WTC11 (cell line): ENCODE measurements at regions of chr2 and their contacts with region 1.

Region 1: DNA sequence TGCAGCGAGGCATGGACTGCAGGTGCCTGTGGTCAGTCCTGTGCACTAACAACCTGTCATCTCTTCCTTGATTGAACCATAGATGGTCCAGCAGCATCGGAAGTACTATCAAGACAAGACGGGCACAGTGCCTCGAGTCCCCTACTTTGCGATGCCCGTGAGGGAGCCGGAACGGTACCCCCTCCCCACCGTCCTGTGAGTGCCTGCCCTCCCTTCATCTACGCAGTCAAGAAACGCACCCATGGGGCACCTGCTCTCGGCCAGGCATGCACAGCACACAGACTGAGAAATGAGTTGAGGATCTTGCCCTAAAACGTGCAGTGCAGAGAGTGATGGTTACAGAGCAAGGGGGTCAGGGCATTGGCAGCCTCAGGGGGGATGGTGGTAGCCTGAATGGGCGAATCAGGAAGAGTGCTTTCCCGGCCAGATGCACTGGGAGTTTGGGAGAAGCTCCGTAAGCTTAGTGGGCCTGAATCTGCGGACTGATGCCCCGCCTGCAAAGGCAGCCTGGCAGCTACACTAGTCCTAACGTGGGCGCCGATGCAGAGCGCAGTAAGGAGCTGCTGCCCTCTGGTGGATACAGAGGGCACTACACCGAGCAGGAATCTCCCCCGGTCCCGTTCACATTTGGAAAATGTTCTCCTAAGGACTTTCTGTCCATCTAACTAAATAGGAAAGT is 63.6 kb downstream of the CIB4 start:
- DNase-seq: peak; percentile 80
- ATAC-seq: peak; percentile 95
- H3K4me3 Mint-ChIP-seq: no peak overlapping the region
- H3K27ac Mint-ChIP-seq: no peak overlapping the region
- H3K4me1 Mint-ChIP-seq: peaks cover 6% of the 10 kb centered on the region
- H3K27me3 Mint-ChIP-seq: peaks cover 24% of the 10 kb centered on the region
- CTCF ChIP-seq: peak; percentile 99

Region 2: GRCh38 chr2:26376799-26377198 is 200.8 kb before region 1 on chr2:
- CTCF ChIA-PET with region 1: no interaction called
- POLR2A ChIA-PET with region 1: no interaction called
- DNase-seq: no peak
- ATAC-seq: no peak
- H3K4me3 Mint-ChIP-seq: no peak overlapping the region
- H3K27ac Mint-ChIP-seq: no peak overlapping the region
- H3K4me1 Mint-ChIP-seq: no peaks in the 10 kb centered on the region
- H3K27me3 Mint-ChIP-seq: no peaks in the 10 kb centered on the region
- CTCF ChIP-seq: no peak

Region 3: DNA sequence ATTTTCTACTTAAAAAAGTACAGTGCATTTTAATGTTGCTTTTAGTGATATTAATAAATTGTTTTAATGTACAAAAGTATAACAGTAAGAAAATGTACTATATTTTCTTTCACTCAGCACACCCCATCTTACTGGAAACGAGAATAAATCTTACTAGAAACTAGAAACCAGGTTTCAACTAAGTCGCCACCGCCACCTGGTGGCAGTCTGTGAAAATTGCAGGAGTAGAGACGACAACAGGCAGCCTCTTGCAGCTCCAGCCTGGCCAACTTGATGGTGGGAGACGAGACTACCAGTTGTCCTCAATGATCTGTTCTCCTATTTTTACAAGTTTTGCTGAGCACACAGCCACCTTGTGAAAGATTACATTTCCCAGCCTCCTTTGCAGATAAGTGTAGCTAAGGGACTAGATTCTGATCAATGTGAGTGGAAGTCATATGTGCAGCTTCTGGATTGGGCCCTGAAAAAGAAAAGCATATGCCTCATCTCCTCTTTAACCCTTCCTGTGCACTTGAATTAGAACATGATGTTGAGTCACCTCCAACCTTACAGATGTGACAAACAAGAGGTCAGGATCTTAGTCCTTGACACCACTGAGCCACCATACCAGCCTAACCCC is 108.4 kb before region 1 on chr2:
- CTCF ChIA-PET with region 1: interaction called, 10 read pairs
- POLR2A ChIA-PET with region 1: no interaction called
- DNase-seq: peak; percentile 88
- ATAC-seq: peak; percentile 49
- H3K4me3 Mint-ChIP-seq: no peak overlapping the region
- H3K27ac Mint-ChIP-seq: no peak overlapping the region
- H3K4me1 Mint-ChIP-seq: 0 out of 2 replicates have a peak, but pooled peaks cover 2% of the 10 kb centered on the region
- H3K27me3 Mint-ChIP-seq: no peaks in the 10 kb centered on the region
- CTCF ChIP-seq: peak; percentile 94

Region 4: DNA sequence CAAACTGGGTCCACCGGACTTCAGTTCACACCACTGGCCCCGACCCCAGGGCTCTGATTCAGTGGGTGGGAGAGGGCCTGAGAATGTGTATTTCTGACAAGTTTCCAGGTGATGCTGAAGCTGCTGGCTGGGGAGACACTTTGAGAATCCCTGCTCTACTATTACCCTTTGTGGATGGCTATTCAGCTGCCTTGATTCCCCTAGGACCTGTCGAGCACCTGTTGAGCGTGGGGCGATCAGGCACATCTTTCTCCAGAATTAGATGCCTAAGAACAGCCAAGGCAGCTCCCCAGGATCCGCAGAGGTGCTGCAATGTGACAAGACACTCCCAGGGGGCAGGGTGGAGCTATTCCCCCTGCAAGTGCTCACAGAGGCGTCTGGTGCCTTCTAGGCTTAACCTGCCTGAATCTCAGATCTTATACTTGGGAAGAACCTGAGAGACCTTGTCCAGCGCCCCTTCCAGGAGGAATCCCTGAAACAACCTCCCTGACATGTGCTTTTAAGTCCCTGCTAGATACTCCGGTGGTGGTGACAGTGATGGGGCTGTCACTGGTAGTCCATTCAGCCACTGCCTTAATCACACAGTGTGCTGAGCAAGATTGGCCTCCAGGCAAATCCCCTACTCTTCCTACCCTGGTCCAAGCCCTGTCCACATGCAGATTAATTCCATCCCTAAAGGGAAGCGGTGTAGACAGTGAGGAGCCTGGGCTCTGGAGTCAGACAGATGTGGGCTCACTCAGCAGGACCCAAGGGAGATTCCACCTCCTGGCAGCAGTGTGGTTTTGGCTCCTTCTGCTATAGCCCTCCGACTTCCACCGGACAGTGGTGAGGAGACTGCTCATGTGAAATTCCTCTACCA is 56.3 kb before region 1 on chr2:
- CTCF ChIA-PET with region 1: interaction called, 97 read pairs
- POLR2A ChIA-PET with region 1: no interaction called
- DNase-seq: peak; percentile 72
- ATAC-seq: peak; percentile 93
- H3K4me3 Mint-ChIP-seq: no peak overlapping the region
- H3K27ac Mint-ChIP-seq: no peak overlapping the region; the same call in 1 of the 2 replicates
- H3K4me1 Mint-ChIP-seq: no peaks in the 10 kb centered on the region
- H3K27me3 Mint-ChIP-seq: no peaks in the 10 kb centered on the region
- CTCF ChIP-seq: no peak

Region 5: GRCh38 chr2:26542194-26542455 is 35.4 kb before region 1 on chr2:
- CTCF ChIA-PET with region 1: interaction called, 37 read pairs
- POLR2A ChIA-PET with region 1: no interaction called
- DNase-seq: no peak
- ATAC-seq: no peak
- H3K4me3 Mint-ChIP-seq: no peak overlapping the region
- H3K27ac Mint-ChIP-seq: no peak overlapping the region
- H3K4me1 Mint-ChIP-seq: peaks cover 28% of the 10 kb centered on the region
- H3K27me3 Mint-ChIP-seq: no peaks in the 10 kb centered on the region
- CTCF ChIP-seq: no peak

Region 6: DNA sequence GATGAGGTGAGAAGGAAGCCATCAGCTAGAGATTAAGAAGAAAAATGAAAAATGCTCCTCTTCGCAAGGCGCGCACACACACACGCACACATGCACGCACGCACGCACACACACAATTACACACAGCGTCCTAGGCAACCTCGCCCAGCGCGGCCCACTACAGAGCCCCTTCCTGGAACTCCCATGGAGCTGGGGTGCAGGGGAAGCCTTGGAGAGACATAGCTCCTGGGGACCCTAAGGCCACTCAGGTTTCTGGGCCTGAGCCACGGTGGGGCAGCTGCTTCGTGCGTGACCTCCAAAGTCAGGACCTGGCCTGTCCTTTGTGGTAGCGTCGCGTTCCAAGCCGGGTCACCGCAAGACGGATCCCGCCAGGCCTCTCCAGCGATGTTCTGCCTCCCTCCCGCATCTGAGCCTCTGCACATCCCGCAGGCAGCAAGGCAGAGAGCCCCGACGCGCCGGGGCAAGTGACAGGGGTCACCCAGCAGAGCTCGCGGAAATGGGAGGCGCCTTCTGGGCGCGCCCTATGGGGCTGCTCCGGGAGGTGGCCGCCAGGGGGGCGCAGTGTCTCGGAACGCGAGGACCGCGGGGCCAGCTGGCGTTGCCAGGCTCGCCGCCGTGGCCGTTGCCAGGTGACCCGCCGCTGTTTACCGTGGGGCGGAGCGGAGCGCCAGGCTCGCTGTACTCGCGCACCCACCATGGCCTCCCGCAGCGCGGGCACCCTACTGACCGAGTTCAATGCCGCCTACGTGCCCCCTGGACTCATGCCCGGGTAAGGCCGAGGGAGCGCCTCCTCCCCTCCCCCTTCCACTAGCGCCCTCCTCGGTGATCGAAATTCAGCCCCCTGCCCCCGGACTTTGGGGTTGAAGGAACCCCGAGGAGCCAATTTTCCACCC is 15.4 kb before region 1 on chr2:
- CTCF ChIA-PET with region 1: interaction called, 83 read pairs
- POLR2A ChIA-PET with region 1: no interaction called
- DNase-seq: peak; percentile 47
- ATAC-seq: peak; percentile 49
- H3K4me3 Mint-ChIP-seq: peak overlapping the region; percentile 62
- H3K27ac Mint-ChIP-seq: no peak overlapping the region
- H3K4me1 Mint-ChIP-seq: peaks cover 8% of the 10 kb centered on the region
- H3K27me3 Mint-ChIP-seq: peaks cover 43% of the 10 kb centered on the region
- CTCF ChIP-seq: no peak

Region 7: GRCh38 chr2:26745609-26746327 is 168.2 kb after region 1 on chr2:
- CTCF ChIA-PET with region 1: interaction called, 13 read pairs
- POLR2A ChIA-PET with region 1: no interaction called
- DNase-seq: peak; percentile 88
- ATAC-seq: peak; percentile 87
- H3K4me3 Mint-ChIP-seq: no peak overlapping the region
- H3K27ac Mint-ChIP-seq: no peak overlapping the region
- H3K4me1 Mint-ChIP-seq: peaks cover 17% of the 10 kb centered on the region
- H3K27me3 Mint-ChIP-seq: peaks cover 49% of the 10 kb centered on the region
- CTCF ChIP-seq: peak; percentile 92